Pancreas (tissue), 10 donors: ENCODE measurements at regions of chr16 and their contacts with region 1.

Region 1: DNA sequence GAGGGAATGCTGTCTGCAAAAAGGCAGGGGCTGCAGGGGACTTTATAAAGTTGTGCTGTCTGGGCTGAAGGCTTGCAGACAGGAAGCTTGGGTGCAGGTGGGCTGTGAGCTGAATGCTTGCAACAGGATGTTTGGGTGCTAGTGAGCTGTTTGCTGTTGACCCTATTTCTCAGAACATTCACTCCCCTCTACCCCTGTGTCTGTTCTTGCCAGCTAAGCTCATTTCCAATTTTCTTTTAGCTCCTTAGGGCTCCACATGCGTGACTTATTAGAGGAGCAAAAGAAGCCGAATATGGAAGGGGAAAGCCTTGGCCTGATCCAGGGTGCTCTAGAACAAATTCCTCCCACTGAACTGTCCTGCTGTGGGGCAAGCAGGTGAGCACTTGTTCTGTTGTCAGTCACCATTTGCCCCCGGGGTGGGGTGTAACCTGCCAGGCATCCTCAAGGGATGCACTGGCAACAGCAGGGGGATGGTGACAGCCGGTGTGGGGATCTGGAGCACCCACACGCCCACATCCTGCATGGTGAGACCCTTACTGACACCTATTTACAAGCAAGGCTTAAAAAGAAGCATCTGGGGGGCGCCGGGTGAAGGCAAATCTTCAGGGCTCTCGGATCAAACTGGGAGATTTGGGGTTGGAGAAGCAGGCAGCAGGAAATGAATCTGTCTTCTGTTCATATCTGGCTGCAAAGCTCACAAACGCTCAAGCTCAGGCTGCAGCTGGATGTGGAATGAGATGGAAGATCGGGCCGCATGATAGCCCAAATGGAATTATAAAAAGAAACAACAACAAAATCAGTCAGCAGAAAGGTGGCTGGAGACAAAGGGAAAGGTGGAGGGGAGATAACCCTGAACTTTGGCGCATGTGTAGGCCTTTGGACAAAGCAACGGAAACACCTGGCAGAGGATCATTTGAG is 21.1 kb upstream of the NUP93 start:
- DNase-seq: no peak
- ATAC-seq: no peak
- H3K4me3 ChIP-seq: no peak overlapping the region
- H3K27ac ChIP-seq: no peak overlapping the region
- H3K4me1 ChIP-seq: no peaks in the 10 kb centered on the region
- H3K27me3 ChIP-seq: no peaks in the 10 kb centered on the region
- CTCF ChIP-seq: no peak

Region 2: DNA sequence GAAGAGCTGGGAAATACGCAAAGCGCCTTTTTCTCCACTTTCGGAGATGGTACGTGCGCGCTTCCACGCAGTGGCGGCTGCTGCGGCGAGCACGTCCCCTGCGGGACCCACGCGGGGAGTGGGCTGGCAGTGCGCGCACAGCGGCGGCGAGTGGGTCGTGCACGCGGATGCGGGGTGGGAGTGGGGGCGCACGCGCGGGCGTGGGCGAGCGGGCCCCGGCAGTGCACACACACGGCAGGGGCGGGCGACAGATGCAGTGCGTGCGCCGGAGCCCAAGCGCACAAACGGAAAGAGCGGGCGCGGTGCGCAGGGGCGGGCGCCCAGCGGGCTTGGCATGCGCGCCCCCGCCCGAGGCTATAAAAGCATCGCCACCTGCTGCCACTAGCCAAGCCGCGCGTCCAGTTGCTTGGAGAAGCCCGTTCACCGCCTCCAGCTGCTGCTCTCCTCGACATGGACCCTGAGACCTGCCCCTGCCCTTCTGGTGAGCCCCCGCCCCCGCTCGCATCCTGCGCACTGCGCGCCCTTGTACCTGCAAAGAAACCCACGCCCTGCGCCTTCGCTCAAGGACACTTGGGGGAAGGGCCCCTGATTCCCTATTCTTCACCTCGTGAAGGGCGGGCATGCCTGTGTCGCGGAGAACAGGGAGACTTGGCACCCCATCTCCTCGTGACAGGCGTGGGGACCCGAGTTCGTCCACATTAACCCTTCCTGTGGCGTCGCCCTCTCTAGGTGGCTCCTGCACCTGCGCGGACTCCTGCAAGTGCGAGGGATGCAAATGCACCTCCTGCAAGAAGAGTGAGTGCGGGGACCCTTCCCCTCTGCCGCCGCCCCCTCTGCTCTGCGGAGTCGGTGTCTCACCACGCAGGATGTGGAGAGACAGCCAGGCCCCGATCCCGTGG is 119.4 kb before region 1 on chr16 and contains the start of gene MT3:
- intact Hi-C with region 1: loop called in 1 of 3 experiments (anchors 10 kb)
- DNase-seq: peak in 1 of 6 donors; percentile 69
- ATAC-seq: peak in 3 of 4 donors; percentile 45 to 79 (median 78)
- H3K4me3 ChIP-seq: peak within 1 kb of the TSS in 3 of 4 donors; percentile 17 to 49 (median 37)
- H3K27ac ChIP-seq: no peak within 1 kb of the TSS
- H3K4me1 ChIP-seq: peaks cover 0 to 3% (median 0%) of the 10 kb centered on the region in 3 donors
- H3K27me3 ChIP-seq: no peaks in the 10 kb centered on the region
- CTCF ChIP-seq: no peak
- total RNA-seq, gene MT3: 0.41 to 0.43 TPM in 2 of 6 donors, not detected in the others